ENCODE measurements at regions of chr3 and their contacts with region 1.

Region 1: DNA sequence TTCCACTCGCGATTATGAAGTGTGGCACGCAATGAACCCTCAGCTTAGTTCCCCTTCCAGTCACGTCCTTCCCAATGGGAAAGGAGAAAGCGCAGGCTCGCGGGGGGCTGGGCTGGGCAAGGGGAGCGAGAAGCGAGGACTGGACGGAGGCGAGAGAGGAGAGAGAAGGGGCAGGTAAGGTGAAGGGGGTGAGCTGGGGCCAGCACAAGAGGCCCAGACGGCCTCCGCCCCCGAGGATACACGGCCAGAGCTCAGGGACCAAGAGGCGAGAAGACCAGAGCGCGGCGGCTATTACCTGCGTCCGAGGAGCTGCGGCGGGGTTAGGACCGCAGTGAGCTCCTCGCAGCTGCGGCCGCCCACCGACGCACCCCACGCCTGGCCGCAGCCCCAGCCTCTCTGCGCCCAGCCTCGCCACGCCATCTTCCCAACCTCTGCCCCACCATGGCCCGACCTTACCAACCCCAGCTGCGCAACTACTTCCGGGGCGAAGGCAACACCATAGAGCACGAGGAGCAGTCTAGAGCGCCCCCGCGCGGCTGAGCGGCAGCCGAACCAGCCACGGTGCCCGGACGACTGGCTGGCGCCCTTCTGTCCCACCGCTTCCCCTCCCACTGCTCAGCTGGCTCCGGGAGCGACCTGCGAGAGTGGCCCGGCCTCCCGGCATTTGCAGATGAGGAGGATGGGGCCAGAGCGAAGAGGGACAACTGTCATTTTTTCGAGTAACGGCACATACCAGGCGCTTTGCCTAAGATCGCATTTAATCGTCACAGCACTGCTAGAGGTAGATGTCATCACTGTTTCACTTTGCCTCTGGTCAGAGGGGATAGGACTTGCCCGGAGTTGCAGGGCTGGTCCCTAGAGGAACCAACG is at the start of gene PARL:
- DNase-seq: peak; percentile 23
- H3K4me3 ChIP-seq: peak within 1 kb of the TSS; percentile 95
- CTCF ChIP-seq: peak; percentile 99

Region 2: GRCh38 chr3:183468424-183468823 is 416.2 kb before region 1 on chr3:
- CTCF ChIA-PET with region 1: interaction called, 24 read pairs
- POLR2A ChIA-PET with region 1: no interaction called
- DNase-seq: no peak
- H3K4me3 ChIP-seq: no peak overlapping the region
- CTCF ChIP-seq: no peak

Region 3: DNA sequence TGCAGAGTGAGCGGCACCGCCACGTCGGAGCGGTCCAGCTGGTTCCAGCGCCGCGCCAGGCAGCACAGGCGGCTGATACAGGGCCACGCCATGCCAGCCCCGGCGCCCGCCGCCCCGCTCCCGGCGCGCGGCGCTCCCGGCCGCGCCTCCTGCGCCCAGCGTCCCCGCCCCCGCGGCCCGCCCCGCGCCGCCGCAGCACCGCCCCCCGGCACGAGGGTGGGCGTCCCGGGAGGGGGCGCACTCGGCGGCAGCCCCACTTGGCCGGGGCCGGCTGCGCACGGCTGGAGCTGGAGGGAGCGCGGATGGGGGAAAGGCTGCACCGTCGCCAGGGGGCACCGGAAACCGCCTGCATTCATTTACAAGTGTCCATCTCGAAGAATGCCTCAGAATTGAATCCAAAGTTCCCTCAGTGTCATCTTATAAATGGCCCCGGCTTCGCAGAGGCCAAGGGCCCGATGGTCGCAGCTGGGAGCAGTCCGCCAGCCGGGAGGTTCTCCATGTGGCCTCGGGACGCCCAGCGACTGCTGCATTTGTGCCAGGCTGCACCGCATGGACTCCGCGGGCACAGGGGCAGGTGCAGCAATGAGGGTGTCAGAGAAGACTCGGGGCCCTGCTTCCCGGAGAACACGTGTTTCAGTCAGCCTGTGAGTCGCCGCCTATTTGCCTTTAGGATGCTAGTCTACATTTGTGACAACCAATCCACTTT is 59.1 kb before region 1 on chr3 and contains the start of gene MAP6D1:
- CTCF ChIA-PET with region 1: interaction called, 34 read pairs
- POLR2A ChIA-PET with region 1: interaction called, 4 read pairs
- DNase-seq: no peak
- H3K4me3 ChIP-seq: peak within 1 kb of the TSS; percentile 68
- CTCF ChIP-seq: peak; percentile 66

Region 4: GRCh38 chr3:183862610-183863009 is 22.1 kb before region 1 on chr3:
- CTCF ChIA-PET with region 1: interaction called, 20 read pairs
- POLR2A ChIA-PET with region 1: no interaction called
- DNase-seq: no peak
- H3K4me3 ChIP-seq: no peak overlapping the region
- CTCF ChIP-seq: no peak